Activated CD4-positive, alpha-beta T cell treated with anti-CD3 and anti-CD28 coated beads for 36 hours (primary cell): ENCODE measurements at regions of chr19 and their contacts with region 1.

Region 1: DNA sequence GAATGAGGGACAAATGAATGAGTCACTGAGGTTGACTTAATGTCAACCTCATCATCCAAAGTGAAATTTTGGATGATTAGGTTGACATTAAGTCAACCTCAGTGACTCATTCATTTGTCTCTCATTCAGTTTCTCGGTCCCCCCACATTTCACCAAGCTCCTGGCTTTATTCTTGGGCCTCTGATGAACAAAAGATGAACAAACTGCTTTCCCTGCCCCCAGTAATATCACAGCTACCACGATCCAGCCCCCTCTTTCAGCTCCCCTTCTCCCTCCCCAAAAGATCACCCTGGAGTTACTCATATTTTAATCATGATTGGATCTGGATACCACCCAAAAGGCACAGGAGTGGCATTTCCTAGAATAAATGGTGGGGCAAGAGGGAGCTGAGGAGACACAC is 10.8 kb downstream of the CEACAM18 start:
- DNase-seq: peak; percentile 50
- ATAC-seq: peak; percentile 91
- H3K4me3 Mint-ChIP-seq: no peak overlapping the region
- H3K27ac Mint-ChIP-seq: peak overlapping the region; percentile 77
- H3K4me1 Mint-ChIP-seq: peaks cover 30% of the 10 kb centered on the region
- H3K27me3 Mint-ChIP-seq: peaks cover 24% of the 10 kb centered on the region

Region 2: DNA sequence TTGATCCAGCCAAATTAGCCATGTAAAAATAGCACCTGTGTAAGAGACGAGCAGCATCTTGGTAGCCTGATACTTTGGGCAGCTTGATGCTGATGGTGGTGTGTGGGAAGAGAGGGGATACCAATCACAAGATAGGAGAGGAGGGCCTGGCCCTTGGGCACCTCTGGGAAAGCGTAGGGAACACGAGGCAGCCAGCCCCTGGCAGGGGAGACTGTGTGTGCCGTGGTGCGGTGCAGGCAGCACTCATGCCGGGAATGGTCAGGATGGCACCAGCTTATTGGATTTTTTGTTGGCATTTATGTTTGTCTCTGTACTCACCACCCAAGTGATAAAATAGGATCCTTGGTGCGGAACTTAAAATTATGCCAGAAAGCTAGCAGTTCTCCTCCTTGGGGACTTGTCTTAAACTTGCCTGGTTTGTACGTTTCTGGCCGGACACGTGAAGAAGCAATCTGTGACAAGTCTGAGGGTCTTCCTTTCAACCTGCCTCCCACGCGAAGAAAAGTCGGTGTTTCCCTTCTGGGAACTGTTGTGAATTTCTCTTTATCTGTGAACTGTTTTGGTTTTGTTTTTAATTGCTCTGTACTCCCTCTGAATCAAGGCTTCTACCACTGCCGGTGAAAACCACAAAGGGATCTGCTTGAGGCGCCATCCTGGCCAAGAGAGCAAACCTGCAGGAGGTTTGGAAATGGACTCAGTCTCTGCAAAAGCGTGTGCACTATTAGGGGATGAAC is 40.9 kb before region 1 on chr19:
- CTCF ChIA-PET with region 1: no interaction called
- POLR2A ChIA-PET with region 1: no interaction called
- intact Hi-C with region 1: loop called in 1 of 2 experiments (anchors 1 kb)
- DNase-seq: peak; percentile 77
- ATAC-seq: peak; percentile 87
- H3K4me3 Mint-ChIP-seq: peak overlapping the region; percentile 50
- H3K27ac Mint-ChIP-seq: peak overlapping the region; percentile 85
- H3K4me1 Mint-ChIP-seq: peaks cover 60% of the 10 kb centered on the region
- H3K27me3 Mint-ChIP-seq: no peaks in the 10 kb centered on the region

Region 3: DNA sequence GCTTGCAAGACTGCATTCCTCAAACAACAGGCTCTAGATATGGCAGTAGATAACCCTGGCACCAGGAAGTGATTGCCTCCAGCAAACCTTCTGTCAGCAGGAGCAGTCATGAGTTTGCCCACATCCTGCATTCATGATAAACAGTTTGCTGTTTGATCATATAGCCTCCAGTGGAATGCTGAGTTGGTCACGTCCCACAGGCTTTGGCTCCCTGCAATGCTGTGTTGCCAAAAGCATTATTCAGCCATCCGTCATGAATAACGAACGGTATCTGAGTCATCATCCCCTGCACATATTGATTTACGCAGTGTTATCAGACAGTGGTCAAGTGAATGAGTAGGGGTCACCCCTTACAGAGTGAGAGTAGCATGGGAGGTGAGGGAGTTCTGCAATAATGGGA is 581.4 kb after region 1 on chr19:
- CTCF ChIA-PET with region 1: no interaction called
- POLR2A ChIA-PET with region 1: no interaction called
- intact Hi-C with region 1: no loop called
- DNase-seq: no peak
- ATAC-seq: no peak
- H3K4me3 Mint-ChIP-seq: no peak overlapping the region
- H3K27ac Mint-ChIP-seq: no peak overlapping the region
- H3K4me1 Mint-ChIP-seq: no peaks in the 10 kb centered on the region
- H3K27me3 Mint-ChIP-seq: no peaks in the 10 kb centered on the region